ENCODE measurements at regions of chr7 and their contacts with region 1.

Region 1: DNA sequence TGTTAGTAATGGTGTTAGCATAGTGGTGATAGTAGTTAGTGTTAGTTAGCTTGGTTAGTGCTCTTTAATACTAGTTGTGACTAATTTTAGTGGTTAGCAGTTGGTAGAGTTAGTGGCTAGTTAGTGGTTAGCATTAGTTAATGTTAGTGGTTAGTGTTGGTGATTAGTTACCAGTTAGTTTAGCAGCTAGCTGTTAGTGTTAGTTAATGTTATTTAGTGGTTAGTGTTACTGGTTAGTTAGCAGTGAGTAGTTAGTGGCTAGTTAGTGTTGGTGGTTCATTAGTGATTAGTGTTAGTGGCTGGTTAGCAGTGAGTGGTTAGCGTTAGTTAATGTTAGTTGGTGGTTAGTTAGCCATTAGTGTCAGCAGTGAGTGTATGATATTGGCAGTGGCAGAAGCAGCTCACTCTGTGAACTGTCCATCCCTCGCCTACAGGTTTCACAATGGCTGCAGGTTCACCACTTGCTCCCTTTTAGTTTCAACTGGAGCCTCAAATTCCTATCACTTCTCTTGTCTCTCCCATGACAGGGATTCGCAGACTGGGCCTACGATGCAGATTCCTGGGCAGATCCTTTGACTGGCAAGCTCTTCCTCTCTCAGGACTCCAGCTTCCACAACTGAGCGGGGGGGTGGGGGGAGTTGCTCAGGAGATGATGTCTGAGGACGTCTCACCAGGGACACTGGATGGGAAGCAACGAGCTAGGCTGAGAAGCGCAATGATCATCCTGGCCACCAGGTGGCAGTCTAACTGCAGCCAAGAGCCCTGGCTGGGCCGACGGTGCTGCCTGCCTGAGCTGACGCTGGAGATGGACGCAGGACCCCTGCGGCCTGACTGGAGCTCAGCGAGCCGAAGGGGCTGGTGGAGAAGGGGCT is 19.5 kb downstream of the GHRHR start:
- DNase-seq: peak; percentile 85
- ATAC-seq: peak; percentile 95
- H3K4me3 Mint-ChIP-seq: no peak overlapping the region
- H3K27ac Mint-ChIP-seq: no peak overlapping the region
- H3K4me1 Mint-ChIP-seq: no peaks in the 10 kb centered on the region
- H3K27me3 Mint-ChIP-seq: peaks cover 39% of the 10 kb centered on the region
- CTCF ChIP-seq: peak; percentile 90

Region 2: GRCh38 chr7:30859940-30860496 is 123.3 kb before region 1 on chr7:
- CTCF ChIA-PET with region 1: no interaction called
- POLR2A ChIA-PET with region 1: no interaction called
- intact Hi-C with region 1: no loop called
- DNase-seq: no peak
- ATAC-seq: no peak
- H3K4me3 Mint-ChIP-seq: no peak overlapping the region
- H3K27ac Mint-ChIP-seq: no peak overlapping the region
- H3K4me1 Mint-ChIP-seq: no peaks in the 10 kb centered on the region
- H3K27me3 Mint-ChIP-seq: no peaks in the 10 kb centered on the region
- CTCF ChIP-seq: no peak

Region 3: DNA sequence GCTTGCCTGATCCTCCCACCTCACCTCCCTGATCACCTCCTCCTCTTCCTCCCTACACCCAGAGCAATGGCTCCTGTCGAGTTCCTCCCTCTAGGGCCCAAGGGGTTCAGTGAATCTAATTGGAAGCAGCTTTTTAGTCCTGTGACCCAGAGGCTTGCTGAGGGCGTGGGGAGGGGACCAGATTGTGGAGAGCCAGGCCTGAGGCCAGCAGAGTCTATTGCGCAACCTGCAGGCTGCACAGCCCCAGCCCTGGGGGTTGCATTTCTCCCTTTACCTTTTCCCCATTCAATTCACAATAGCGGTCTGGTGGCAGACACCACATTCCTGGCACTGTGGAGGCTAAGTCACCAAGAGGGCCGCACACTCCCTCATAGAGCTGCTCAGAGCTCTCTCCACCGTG is 13.0 kb after region 1 on chr7:
- CTCF ChIA-PET with region 1: interaction called, 16 read pairs
- POLR2A ChIA-PET with region 1: no interaction called
- intact Hi-C with region 1: no loop called
- DNase-seq: no peak
- ATAC-seq: no peak
- H3K4me3 Mint-ChIP-seq: no peak overlapping the region
- H3K27ac Mint-ChIP-seq: no peak overlapping the region
- H3K4me1 Mint-ChIP-seq: no peaks in the 10 kb centered on the region
- H3K27me3 Mint-ChIP-seq: peaks cover 1% of the 10 kb centered on the region
- CTCF ChIP-seq: no peak

Region 4: GRCh38 chr7:31027161-31027965 is 44.1 kb after region 1 on chr7:
- CTCF ChIA-PET with region 1: interaction called, 14 read pairs
- POLR2A ChIA-PET with region 1: no interaction called
- intact Hi-C with region 1: no loop called
- DNase-seq: peak; percentile 24
- ATAC-seq: peak; percentile 22
- H3K4me3 Mint-ChIP-seq: no peak overlapping the region
- H3K27ac Mint-ChIP-seq: no peak overlapping the region
- H3K4me1 Mint-ChIP-seq: peaks cover 21% of the 10 kb centered on the region
- H3K27me3 Mint-ChIP-seq: peaks cover 2% of the 10 kb centered on the region
- CTCF ChIP-seq: no peak

Region 5: DNA sequence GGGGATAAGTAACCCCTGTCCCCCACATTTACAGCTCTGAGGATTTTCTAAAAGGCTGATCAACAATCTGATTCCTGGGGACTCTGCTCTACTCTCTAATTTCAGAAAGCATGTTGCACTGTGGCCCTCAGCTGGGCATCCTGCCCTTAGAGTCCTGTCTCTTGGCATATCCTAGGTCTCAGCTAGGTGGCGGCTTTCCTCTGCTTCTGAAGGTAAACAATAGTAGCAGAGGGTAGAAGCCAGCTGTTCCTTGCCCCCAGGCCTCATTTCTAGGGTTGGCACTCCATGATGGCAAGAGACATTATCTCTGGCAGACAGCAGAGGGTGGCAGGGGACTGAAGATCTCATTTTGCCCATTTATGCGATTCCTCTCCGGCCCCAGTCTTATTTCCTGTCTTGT is 145.8 kb after region 1 on chr7:
- CTCF ChIA-PET with region 1: interaction called, 275 read pairs
- POLR2A ChIA-PET with region 1: no interaction called
- intact Hi-C with region 1: no loop called
- DNase-seq: no peak
- ATAC-seq: no peak
- H3K4me3 Mint-ChIP-seq: no peak overlapping the region
- H3K27ac Mint-ChIP-seq: no peak overlapping the region
- H3K4me1 Mint-ChIP-seq: no peaks in the 10 kb centered on the region
- H3K27me3 Mint-ChIP-seq: peaks cover 2% of the 10 kb centered on the region
- CTCF ChIP-seq: no peak

Region 6: GRCh38 chr7:31228957-31229356 is 245.7 kb after region 1 on chr7:
- CTCF ChIA-PET with region 1: no interaction called
- POLR2A ChIA-PET with region 1: no interaction called
- intact Hi-C with region 1: no loop called
- DNase-seq: no peak
- ATAC-seq: no peak
- H3K4me3 Mint-ChIP-seq: no peak overlapping the region
- H3K27ac Mint-ChIP-seq: no peak overlapping the region
- H3K4me1 Mint-ChIP-seq: no peaks in the 10 kb centered on the region
- H3K27me3 Mint-ChIP-seq: no peaks in the 10 kb centered on the region
- CTCF ChIP-seq: no peak

Region 7: DNA sequence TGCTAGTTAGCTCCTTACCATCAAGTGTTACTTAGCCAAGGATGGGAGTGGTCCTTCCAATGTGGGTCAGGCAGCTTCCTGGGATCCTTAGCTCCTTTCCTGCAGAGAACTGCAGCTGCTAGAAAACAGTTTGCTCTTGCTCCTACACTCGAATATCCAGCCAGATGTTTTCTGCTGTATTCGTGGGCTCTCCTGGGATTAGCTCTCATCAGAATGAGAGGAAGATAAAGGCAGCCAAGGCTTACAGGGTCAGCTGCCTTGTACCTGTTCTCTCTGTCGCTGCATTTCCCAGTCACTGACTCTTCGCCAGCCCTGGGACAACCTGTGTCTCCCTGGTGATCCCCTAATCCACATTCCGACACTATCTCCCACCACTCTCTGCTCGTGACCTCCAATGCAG is 328.3 kb after region 1 on chr7:
- CTCF ChIA-PET with region 1: no interaction called
- POLR2A ChIA-PET with region 1: no interaction called
- intact Hi-C with region 1: no loop called
- DNase-seq: no peak
- ATAC-seq: no peak
- H3K4me3 Mint-ChIP-seq: no peak overlapping the region
- H3K27ac Mint-ChIP-seq: no peak overlapping the region
- H3K4me1 Mint-ChIP-seq: no peaks in the 10 kb centered on the region
- H3K27me3 Mint-ChIP-seq: no peaks in the 10 kb centered on the region
- CTCF ChIP-seq: no peak

Region 8: DNA sequence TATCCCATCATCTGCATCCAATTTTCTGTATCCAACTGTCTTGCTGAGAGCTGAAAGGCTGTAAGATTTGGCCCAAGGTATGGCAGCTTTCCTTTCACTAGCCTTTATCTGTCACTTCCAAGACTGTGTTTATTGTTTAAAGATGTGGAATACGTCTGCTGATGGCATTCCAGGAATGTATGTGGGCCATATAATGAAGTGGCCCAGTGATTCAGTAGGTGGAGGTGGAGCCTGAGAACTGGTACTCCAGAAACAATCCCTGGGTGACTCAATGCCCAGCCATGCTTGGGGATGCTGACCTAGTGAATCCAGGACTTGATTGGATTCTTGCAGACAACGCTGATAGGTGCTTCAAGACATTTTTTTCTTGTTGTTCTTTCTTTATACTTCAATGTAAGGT is 343.8 kb after region 1 on chr7:
- CTCF ChIA-PET with region 1: no interaction called
- POLR2A ChIA-PET with region 1: no interaction called
- intact Hi-C with region 1: no loop called
- DNase-seq: no peak
- ATAC-seq: no peak
- H3K4me3 Mint-ChIP-seq: no peak overlapping the region
- H3K27ac Mint-ChIP-seq: no peak overlapping the region
- H3K4me1 Mint-ChIP-seq: no peaks in the 10 kb centered on the region
- H3K27me3 Mint-ChIP-seq: no peaks in the 10 kb centered on the region
- CTCF ChIP-seq: no peak

Measured in activated CD8-positive, alpha-beta T cell treated with anti-CD3 and anti-CD28 coated beads for 36 hours (primary cell).